ENCODE measurements at regions of chr5 and their contacts with region 1.

Region 1: DNA sequence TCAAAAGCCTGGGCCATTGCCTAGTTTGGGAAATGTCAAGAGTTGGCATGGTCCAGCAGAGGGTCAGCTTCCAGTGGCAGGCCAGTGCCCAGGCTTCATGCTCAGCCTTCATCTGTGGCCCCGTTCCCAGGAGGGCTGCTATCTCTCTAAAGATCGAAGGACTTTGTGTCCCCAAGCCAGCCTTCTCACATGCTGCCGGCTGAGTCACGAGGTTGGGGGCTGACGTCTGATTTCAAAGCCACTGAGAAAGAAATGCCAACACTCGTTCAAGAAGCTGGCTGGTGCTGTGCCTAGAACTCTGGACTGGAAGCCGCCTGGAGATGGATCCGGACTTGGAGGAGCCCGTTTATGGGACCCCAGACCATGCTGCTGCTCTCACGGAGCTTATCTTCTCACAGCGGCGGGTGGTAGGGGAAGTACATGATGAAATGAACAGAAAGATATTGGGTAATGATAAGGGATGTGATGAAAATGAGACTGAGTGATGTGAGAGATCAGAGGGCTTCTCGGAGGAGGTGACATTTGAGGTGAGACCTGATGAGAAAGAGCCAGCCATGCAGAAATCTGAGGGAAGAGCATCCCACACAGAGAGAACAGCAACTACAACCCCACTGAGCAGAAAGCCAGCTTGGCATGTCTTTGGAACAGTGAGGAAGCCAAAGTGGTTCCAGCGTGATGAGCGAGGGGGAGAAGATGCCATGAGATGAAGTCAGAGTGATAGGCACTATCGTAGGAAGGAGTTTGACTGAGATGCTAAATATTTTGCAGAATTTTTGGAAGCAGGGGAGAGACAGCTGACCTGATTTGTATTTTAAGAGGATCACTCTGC is 54.9 kb upstream of the BOD1 start:
- DNase-seq: peak; percentile 67 to 96 (median 78)

Region 2: DNA sequence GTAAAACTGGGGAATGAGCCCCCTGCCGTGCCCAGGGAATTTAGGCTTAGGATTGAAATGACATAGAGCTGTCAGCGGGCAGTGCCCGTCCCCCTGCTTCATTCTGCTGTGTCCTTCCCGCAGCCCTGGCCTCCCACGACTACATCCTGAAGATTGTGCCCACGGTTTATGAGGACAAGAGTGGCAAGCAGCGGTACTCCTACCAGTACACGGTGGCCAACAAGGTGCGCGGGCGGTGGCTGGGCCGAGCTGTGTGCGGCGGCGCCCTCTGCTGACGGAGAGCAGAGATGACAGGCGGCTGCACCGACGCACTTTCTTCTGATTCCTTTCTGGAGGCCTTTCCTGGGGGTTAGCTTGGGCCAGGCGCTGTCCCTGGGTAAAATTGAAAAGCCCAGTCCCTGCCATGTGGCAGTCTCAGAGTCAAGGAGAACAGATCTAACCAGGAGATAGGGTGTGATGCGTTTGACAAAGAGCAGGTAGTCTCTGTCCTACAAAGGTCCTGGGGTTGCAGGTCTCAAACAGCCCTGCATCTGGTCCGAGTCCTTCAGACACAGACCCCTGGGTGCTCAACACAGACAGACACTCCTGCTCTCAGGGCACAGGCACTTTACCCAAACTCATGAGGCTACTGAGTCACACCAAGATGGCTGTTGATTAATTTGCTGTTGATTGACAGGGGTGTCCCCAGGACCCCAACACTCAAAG is 738.9 kb before region 1 on chr5:
- intact Hi-C with region 1: no loop called
- DNase-seq: peak; percentile 64 to 97 (median 80)

Region 3: GRCh38 chr5:173573126-173573960 is 98.0 kb before region 1 on chr5:
- intact Hi-C with region 1: no loop called
- DNase-seq: peak; percentile 61 to 97 (median 86)

Region 4: GRCh38 chr5:173625696-173626504 is 45.4 kb before region 1 on chr5:
- intact Hi-C with region 1: loop called (anchors 2 kb)
- DNase-seq: no peak

Region 5: GRCh38 chr5:173775261-173776129 is 104.2 kb after region 1 on chr5:
- intact Hi-C with region 1: loop called (anchors 2 kb)
- DNase-seq: peak in 2 of 10 donors; percentile 34 to 61

Measured in posterior cingulate gyrus (tissue), 11 donors.